AG04450 (cell line): ENCODE measurements at regions of chr19 and their contacts with region 1.

Region 1: GRCh38 chr19:9115307-9115813 is at the start of gene OR7G1:
- DNase-seq: no peak
- H3K4me3 ChIP-seq: no peak within 1 kb of the TSS
- H3K27ac ChIP-seq: no peak within 1 kb of the TSS
- H3K27me3 ChIP-seq: no peaks in the 10 kb centered on the region
- CTCF ChIP-seq: no peak
- polyA plus RNA-seq, gene OR7G1: not detected in 2 replicates

Region 2: DNA sequence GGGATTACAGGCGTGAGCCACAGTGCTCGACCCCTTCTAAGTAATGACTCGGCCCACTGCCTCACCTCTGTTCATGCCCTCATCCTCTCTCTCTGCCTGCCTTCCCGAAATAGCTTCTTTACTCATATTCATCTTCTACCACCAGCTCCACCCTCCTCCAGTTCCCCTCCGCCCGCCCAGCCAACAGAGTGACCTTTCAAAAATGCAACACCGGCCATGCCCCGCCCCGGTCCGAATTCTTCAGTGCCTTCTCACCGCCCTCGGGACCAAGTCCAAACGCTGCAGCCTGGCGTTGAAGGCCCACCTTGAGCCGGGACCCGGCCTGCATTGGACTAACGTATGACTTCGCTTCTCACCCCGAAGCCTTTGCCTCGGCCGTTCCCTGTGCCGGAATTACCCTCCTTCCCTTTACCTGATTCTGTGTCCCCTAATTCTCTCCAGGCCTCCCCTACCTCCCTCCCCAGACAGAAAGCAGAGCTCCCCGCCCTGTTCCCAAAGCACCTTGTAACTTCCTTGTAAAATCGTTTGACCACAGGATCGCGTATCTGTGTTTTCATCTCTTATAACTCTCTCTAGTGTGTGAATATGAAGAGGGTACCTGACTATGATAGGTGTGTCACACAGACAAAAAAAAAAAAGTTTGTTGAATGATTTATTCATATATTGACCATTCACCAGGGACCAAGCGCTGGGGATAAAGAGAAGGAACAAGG is 97.0 kb before region 1 on chr19:
- CTCF ChIA-PET with region 1: no interaction called
- POLR2A ChIA-PET with region 1: no interaction called
- DNase-seq: no peak
- H3K4me3 ChIP-seq: no peak overlapping the region
- H3K27ac ChIP-seq: no peak overlapping the region
- H3K27me3 ChIP-seq: no peaks in the 10 kb centered on the region
- CTCF ChIP-seq: no peak

Region 3: GRCh38 chr19:9165256-9165655 is 49.9 kb after region 1 on chr19:
- CTCF ChIA-PET with region 1: no interaction called
- POLR2A ChIA-PET with region 1: no interaction called
- DNase-seq: no peak
- H3K4me3 ChIP-seq: no peak overlapping the region
- H3K27ac ChIP-seq: no peak overlapping the region
- H3K27me3 ChIP-seq: no peaks in the 10 kb centered on the region
- CTCF ChIP-seq: no peak

Region 4: DNA sequence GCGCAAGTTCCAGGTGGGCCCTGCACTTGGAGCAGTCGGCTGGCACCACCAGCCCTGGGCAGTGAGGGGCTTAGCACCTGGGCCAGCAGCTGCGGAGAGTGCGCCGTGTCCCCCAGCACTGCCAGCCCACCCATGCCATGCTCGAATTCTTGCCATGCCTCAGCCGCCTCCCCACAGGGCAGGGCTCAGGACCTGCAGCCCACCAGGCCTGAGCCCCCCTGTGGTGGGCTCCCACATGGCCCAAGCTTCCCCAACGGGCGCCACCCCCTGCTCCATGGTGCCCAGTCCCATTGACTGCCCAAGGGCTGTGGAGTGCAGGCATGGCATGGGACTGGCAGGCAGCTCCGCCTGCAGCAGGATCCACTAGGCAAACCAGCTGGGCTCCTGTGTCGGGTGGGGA is 432.5 kb after region 1 on chr19:
- CTCF ChIA-PET with region 1: no interaction called
- POLR2A ChIA-PET with region 1: interaction called, 10 read pairs
- DNase-seq: no peak
- H3K4me3 ChIP-seq: no peak overlapping the region
- H3K27ac ChIP-seq: no peak overlapping the region
- H3K27me3 ChIP-seq: no peaks in the 10 kb centered on the region
- CTCF ChIP-seq: no peak